Activated CD4-positive, alpha-beta T cell treated with anti-CD3 and anti-CD28 coated beads for 36 hours (primary cell): ENCODE measurements at regions of chr7 and their contacts with region 1.

Region 1: GRCh38 chr7:67619175-67619574 is 622.5 kb downstream of the TYW1 start:
- DNase-seq: no peak
- ATAC-seq: no peak
- H3K4me3 Mint-ChIP-seq: no peak overlapping the region
- H3K27ac Mint-ChIP-seq: no peak overlapping the region
- H3K4me1 Mint-ChIP-seq: no peaks in the 10 kb centered on the region
- H3K27me3 Mint-ChIP-seq: peaks cover 6% of the 10 kb centered on the region

Region 2: DNA sequence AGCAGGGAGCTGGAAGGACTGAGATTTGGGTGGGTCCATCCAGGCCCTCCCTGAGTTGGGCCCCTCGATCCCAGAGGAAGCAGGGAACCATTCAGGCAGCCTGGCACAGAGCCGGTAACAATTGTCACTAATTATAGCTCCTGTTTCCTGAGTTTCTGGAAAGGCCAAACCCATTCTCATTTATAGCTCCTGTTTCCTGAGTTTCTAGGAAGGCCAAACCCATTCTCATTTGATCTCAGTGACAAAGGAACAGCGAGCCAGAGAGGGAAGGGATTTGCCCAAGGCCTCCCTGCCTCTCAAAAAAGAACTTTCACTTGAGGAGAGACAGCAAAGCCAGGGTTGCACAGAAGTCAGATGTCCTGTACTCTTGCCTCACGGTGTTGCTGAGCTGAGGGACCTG is 100.6 kb before region 1 on chr7:
- CTCF ChIA-PET with region 1: no interaction called
- POLR2A ChIA-PET with region 1: no interaction called
- intact Hi-C with region 1: no loop called
- DNase-seq: no peak
- ATAC-seq: no peak
- H3K4me3 Mint-ChIP-seq: no peak overlapping the region
- H3K27ac Mint-ChIP-seq: no peak overlapping the region
- H3K4me1 Mint-ChIP-seq: no peaks in the 10 kb centered on the region
- H3K27me3 Mint-ChIP-seq: no peaks in the 10 kb centered on the region

Region 3: DNA sequence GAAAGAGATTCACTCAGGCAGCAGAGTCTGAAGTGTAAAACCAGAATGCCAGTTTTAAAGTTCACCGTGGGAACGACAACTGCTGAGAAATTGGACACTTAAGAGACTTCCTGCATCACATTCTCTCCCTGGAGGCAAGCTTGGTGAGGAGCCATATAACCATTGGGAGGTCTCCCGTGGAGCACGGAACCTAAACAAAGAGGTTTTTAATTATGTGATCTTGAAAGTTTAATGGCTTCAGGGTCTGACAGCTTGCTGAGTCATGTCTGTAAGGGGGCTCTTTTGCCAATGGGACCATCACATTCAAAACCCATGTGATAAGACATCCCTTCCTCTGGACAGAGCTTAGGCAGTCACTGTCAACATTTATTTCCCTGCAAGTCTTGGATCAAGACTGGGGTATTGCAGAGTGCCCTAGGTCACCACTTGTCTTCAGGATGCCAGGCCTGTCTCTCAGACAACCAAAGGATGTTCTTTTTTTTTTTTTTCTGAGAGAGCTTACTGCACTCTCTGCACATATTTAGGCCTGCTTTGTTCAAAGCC is 51.9 kb after region 1 on chr7:
- CTCF ChIA-PET with region 1: no interaction called
- POLR2A ChIA-PET with region 1: no interaction called
- intact Hi-C with region 1: loop called in 1 of 2 experiments (anchors 10 kb)
- DNase-seq: no peak
- ATAC-seq: no peak
- H3K4me3 Mint-ChIP-seq: no peak overlapping the region
- H3K27ac Mint-ChIP-seq: no peak overlapping the region
- H3K4me1 Mint-ChIP-seq: no peaks in the 10 kb centered on the region
- H3K27me3 Mint-ChIP-seq: no peaks in the 10 kb centered on the region